WTC11 (cell line): ENCODE measurements at regions of chr9 and their contacts with region 1.

Region 1: GRCh38 chr9:111287127-111287526 is 42.9 kb downstream of the OR2K2 start:
- DNase-seq: no peak
- ATAC-seq: no peak; the same call in 1 of the 2 replicates
- H3K4me3 Mint-ChIP-seq: no peak overlapping the region
- H3K27ac Mint-ChIP-seq: no peak overlapping the region
- H3K4me1 Mint-ChIP-seq: peaks cover 5% of the 10 kb centered on the region; the same call in 1 of the 2 replicates
- H3K27me3 Mint-ChIP-seq: no peaks in the 10 kb centered on the region; the same call in 1 of the 2 replicates
- CTCF ChIP-seq: no peak

Region 2: DNA sequence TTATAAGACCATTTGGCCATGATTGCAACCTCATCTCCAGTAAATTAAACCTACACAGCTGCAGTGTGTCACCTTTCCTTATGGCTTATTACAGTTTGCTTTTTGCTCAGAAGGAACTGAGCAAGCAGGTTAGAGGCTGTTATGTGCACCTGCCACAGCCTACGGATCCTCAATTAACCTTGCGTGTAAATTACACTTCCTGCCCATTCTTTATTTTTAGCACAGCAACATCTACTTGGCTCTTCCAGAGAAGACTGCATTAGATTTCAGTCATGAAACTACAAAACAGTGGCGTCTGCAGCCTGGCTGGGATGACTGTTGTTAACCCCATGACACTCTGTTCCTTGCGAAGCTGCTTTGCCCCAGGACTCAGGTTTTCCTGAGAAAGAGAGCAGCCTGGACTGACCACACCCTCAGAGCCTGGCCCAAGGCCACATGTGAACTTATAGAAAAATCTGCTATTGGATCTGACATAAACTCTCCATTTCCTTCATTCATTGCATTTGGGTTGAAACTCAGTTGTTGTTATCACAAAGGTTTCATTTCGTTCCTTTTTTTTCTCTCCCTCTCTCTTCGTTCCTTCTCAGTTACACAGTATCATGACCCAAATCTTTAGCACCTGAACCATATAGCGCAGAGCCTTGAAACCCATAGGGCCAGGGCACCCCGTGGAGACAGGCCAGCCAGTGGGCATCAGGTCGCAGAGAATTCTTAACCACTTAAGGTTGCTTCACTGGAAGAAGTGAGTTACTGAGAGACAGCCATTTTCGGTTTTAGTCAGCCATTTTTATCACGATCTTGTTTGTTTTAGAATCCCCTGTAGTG is 1368.6 kb before region 1 on chr9:
- CTCF ChIA-PET with region 1: no interaction called
- POLR2A ChIA-PET with region 1: interaction called, 12 read pairs
- DNase-seq: no peak
- ATAC-seq: no peak
- H3K4me3 Mint-ChIP-seq: no peak overlapping the region
- H3K27ac Mint-ChIP-seq: no peak overlapping the region
- H3K4me1 Mint-ChIP-seq: peaks cover 10% of the 10 kb centered on the region
- H3K27me3 Mint-ChIP-seq: no peaks in the 10 kb centered on the region
- CTCF ChIP-seq: no peak

Region 3: GRCh38 chr9:111099199-111100008 is 187.7 kb before region 1 on chr9:
- CTCF ChIA-PET with region 1: no interaction called
- POLR2A ChIA-PET with region 1: no interaction called
- DNase-seq: peak; percentile 22
- ATAC-seq: peak; percentile 73
- H3K4me3 Mint-ChIP-seq: no peak overlapping the region
- H3K27ac Mint-ChIP-seq: peak overlapping the region; percentile 73
- H3K4me1 Mint-ChIP-seq: peaks cover 77% of the 10 kb centered on the region
- H3K27me3 Mint-ChIP-seq: peaks cover 50% of the 10 kb centered on the region
- CTCF ChIP-seq: no peak

Region 4: GRCh38 chr9:111212874-111213273 is 74.3 kb before region 1 on chr9:
- CTCF ChIA-PET with region 1: no interaction called
- POLR2A ChIA-PET with region 1: no interaction called
- DNase-seq: no peak
- ATAC-seq: no peak
- H3K4me3 Mint-ChIP-seq: no peak overlapping the region
- H3K27ac Mint-ChIP-seq: no peak overlapping the region
- H3K4me1 Mint-ChIP-seq: peaks cover 11% of the 10 kb centered on the region
- H3K27me3 Mint-ChIP-seq: no peaks in the 10 kb centered on the region
- CTCF ChIP-seq: no peak